PC-3 (cell line): ENCODE measurements at regions of chr1 and their contacts with region 1.

Region 1: DNA sequence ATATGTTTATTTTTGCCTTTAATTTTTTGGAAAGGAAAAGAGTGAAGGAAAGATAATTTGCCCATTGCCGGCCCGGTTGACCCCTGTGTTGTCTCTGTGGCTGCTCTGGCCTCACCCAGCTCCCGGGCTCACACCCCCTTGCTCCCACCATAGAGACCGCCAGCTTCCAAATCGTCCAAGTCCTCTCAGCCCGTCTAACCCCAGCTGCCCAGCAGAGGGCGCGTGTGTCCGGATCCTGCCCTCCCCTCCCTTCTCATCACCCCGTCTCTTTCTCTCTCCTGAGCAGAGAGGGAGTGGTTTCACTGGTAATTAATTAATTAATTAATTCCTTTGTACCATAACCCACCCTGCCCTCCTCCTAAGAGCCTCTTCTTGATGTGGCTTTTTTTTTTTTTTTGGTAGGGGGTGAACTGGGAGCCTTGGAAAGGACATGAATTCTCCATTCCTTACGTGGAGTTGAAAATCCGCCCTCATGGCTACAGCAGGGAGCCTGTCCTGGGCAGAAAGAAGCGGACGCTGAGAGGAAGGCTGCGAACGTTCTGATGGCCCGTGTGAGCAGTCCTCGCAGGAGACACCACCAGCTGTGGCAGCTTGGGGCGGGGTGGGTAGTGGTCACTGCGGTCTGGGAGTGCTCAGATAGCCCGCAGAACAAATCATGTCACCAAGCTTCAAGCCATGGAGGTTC is 45.9 kb downstream of the KIAA0040 start:
- DNase-seq: peak; percentile 65
- ATAC-seq: peak; percentile 76
- H3K4me3 ChIP-seq: peak overlapping the region; percentile 53
- H3K27ac ChIP-seq: peak overlapping the region; percentile 36
- H3K4me1 ChIP-seq: peaks cover 22% of the 10 kb centered on the region
- H3K27me3 ChIP-seq: no peaks in the 10 kb centered on the region
- CTCF ChIP-seq: peak; percentile 80

Region 2: DNA sequence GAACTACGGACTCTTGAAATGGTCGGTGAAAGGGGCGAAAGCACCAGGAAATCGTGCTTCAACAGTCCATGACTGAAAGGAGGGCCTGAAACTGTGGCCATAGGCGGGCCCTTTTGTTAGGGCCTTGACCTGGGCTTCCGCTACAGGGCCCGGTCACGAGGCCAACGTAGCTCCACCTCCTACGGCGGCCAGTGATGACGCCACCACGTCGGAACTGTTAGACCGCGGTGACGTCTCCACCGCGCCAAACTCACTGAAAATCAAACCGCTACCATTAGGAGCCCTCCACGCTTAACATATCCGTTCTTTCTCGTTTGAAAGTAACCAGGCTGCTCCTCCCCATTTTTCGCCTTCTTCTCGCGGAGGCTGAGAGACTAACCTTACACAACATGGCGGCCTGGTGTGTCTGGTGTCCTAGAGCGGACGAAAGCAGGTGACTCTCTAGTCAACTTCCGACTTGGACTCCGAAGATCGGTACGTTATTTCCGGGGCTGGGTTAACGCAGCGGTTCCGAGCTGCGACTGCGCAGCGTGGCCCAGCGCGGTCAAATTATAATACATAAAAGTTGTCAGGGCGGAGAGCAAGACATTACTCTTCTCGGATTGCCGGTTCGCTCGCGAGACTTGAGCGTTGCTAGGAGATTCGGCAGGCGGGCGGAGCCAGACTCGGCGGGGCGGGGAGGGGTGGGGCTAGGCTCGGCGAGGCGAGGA is 147.3 kb before region 1 on chr1:
- CTCF ChIA-PET with region 1: no interaction called
- POLR2A ChIA-PET with region 1: no interaction called
- intact Hi-C with region 1: no loop called
- DNase-seq: peak; percentile 95
- ATAC-seq: peak; percentile 77
- H3K4me3 ChIP-seq: peak overlapping the region; percentile 82
- H3K27ac ChIP-seq: peak overlapping the region; percentile 94
- H3K4me1 ChIP-seq: peaks cover 47% of the 10 kb centered on the region
- H3K27me3 ChIP-seq: no peaks in the 10 kb centered on the region
- CTCF ChIP-seq: no peak

Region 3: GRCh38 chr1:175015243-175015642 is 131.4 kb before region 1 on chr1:
- CTCF ChIA-PET with region 1: no interaction called
- POLR2A ChIA-PET with region 1: no interaction called
- intact Hi-C with region 1: no loop called
- DNase-seq: no peak
- ATAC-seq: no peak
- H3K4me3 ChIP-seq: no peak overlapping the region
- H3K27ac ChIP-seq: no peak overlapping the region
- H3K4me1 ChIP-seq: no peaks in the 10 kb centered on the region
- H3K27me3 ChIP-seq: no peaks in the 10 kb centered on the region
- CTCF ChIP-seq: no peak

Region 4: GRCh38 chr1:175033953-175034352 is 112.7 kb before region 1 on chr1:
- CTCF ChIA-PET with region 1: interaction called, 5 read pairs
- POLR2A ChIA-PET with region 1: no interaction called
- intact Hi-C with region 1: loop called (anchors 5 kb)
- DNase-seq: no peak
- ATAC-seq: no peak
- H3K4me3 ChIP-seq: no peak overlapping the region
- H3K27ac ChIP-seq: no peak overlapping the region
- H3K4me1 ChIP-seq: peaks cover 18% of the 10 kb centered on the region
- H3K27me3 ChIP-seq: no peaks in the 10 kb centered on the region
- CTCF ChIP-seq: no peak

Region 5: GRCh38 chr1:176880954-176881595 is 1734.4 kb after region 1 on chr1:
- CTCF ChIA-PET with region 1: no interaction called
- POLR2A ChIA-PET with region 1: no interaction called
- intact Hi-C with region 1: loop called (anchors 5 kb)
- DNase-seq: peak; percentile 76
- ATAC-seq: peak; percentile 85
- H3K4me3 ChIP-seq: no peak overlapping the region
- H3K27ac ChIP-seq: no peak overlapping the region
- H3K4me1 ChIP-seq: no peaks in the 10 kb centered on the region
- H3K27me3 ChIP-seq: peaks cover 16% of the 10 kb centered on the region
- CTCF ChIP-seq: peak; percentile 80